ENCODE measurements at regions of chr13 and their contacts with region 1.

Region 1: DNA sequence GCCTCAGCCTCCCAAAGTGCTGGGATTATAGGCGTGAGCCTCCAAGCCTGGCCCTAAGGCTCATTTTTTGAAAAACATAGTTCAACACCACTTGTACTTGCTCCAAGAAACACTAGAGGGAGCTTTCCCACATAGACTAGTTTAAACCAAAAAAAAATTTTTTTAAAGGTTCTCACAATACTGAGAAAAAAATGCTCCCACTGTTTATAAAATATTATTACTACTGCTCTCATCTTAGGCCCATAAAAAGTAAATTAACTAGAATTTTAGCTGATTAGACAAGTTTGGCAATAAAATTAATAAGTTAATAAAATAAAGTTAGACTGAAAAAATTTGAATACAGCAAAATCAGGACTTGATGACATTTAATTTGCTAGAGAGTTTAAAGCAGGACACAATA is 109.5 kb downstream of the TBC1D4 start:
- DNase-seq: no peak
- H3K4me3 ChIP-seq: no peak overlapping the region
- CTCF ChIP-seq: no peak
- POLR2A ChIP-seq: no peak

Region 2: GRCh38 chr13:75479102-75479740 is 106.7 kb after region 1 on chr13:
- intact Hi-C with region 1: loop called (anchors 5 kb)
- DNase-seq: no peak
- H3K4me3 ChIP-seq: no peak overlapping the region
- CTCF ChIP-seq: no peak
- POLR2A ChIP-seq: no peak

Region 3: GRCh38 chr13:75549262-75550158 is 177.0 kb after region 1 on chr13 and contains the start of gene UCHL3:
- intact Hi-C with region 1: loop called (anchors 5 kb)
- DNase-seq: peak; percentile 93 to 98
- H3K4me3 ChIP-seq: peak within 1 kb of the TSS; percentile 74
- CTCF ChIP-seq: peak in 1 of 3 donors; percentile 93
- POLR2A ChIP-seq: no peak
- total RNA-seq, gene UCHL3: 30.6 to 65.1 (median 46.7) TPM

Region 4: DNA sequence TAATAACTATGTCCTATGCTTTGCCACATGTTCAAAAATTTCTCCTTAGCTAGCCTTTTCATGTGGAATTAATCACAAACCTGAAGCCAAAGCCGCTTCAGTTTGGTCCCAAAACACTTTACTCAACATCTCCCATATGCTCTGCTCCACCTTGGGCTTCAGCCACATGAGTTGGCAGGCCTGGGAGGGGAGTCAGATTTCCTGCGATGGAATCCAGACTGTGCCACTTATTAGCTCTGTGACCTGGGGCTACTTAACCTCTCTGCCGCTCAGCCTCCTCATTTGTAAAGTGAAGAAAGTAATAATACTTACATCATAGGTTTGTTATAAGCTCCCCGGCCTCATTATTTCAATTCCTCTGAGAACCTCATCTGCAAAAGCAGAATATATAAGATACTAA is 535.6 kb after region 1 on chr13:
- intact Hi-C with region 1: no loop called
- DNase-seq: no peak
- H3K4me3 ChIP-seq: no peak overlapping the region
- CTCF ChIP-seq: no peak
- POLR2A ChIP-seq: no peak

Region 5: DNA sequence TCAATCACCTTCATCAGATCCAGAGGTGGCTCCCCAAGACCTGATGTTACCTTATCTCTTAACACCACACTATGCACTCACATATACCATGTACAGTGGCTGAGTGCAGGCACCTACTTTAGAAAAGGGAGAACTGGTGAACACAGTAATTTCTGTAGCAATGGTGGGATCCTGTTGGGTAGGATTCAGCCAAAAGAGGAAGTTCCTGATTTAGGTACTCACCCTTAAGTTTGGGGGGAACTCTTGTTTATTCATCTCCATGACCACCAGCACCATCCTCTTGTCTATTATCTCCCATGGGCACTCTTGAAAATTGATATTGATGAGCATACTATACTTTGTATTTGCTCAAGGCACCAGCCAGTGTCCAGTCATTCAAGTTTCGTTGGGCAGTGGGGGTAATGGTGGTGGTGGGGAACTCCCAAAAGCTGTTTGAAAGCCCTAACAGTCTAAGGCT is 588.0 kb after region 1 on chr13:
- intact Hi-C with region 1: no loop called
- DNase-seq: no peak
- H3K4me3 ChIP-seq: no peak overlapping the region
- CTCF ChIP-seq: no peak
- POLR2A ChIP-seq: no peak

Measured in lower leg skin (tissue), 4 donors.